ENCODE measurements at regions of chr2 and their contacts with region 1.

Region 1: GRCh38 chr2:100610381-100610831 is 47.6 kb downstream of the PDCL3 start:
- DNase-seq: peak; percentile 68
- CTCF ChIP-seq: peak; percentile 67

Region 2: GRCh38 chr2:100416935-100417710 is 193.3 kb before region 1 on chr2 and contains the start of gene CHST10:
- CTCF ChIA-PET with region 1: no interaction called
- POLR2A ChIA-PET with region 1: no interaction called
- DNase-seq: peak; percentile 88
- CTCF ChIP-seq: no peak

Region 3: DNA sequence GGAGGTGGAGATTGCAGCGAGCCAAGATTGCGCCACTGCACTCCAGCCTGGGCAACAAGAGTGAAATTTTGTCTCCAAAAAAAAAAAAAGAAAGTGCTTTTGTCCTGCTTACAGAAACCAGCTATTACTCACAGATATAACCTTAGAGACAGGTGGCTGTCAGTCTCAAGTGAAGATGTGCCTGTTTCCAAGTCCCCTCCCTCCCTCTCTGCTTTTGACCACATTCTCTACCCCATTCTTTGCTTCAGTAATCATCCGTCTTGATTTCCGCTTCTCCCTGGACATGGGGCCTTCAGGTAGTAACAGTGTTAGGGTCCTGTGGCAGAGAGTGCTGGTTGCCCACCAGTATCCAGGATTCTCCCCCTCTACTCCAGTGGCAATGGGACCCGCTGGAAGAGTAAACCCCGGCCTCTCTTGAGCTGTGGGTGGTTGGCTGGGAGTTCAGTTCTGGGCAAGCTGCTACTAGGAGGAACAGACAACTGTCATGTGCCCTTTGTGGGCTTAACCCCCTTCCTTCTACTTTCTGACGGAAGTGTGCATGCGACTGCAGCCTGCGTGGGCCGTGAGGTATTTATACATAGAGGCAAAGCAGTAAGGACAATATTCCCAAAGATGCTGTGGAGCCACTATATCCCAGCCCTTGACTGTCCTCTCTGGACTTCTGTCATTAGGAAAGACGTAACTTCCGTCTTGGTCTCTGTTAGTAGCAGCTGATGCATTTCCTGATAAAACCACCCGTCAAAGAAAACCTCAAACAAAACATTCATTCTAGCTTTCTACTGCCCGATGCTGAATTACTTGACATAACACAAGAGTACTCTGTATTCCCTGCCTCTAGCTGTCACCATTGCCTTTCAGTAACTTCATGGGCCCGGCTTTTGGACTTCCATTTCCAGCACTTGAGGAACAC is 29.8 kb before region 1 on chr2:
- CTCF ChIA-PET with region 1: interaction called, 12 read pairs
- POLR2A ChIA-PET with region 1: no interaction called
- DNase-seq: peak; percentile 64
- CTCF ChIP-seq: no peak

Region 4: DNA sequence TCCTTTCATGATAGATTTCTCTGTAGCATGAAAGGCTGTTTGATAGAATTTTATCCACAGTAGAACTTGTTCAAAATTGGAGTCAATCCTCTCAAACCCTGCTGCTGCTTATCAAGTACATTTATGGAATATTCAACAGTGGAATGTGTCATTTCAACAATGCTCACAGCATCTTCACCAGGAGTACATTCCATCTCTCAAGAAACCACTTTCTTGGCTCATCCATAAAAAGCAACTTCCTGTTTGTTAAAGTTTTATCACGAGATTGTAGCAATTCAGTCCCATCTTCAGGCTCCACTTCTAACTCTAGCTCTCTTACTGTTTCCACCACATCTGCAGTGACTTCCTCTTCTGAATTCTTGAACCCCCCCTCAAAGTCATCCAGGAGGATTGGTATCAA is 18.2 kb before region 1 on chr2:
- CTCF ChIA-PET with region 1: interaction called, 76 read pairs
- POLR2A ChIA-PET with region 1: no interaction called
- DNase-seq: no peak
- CTCF ChIP-seq: no peak

Region 5: DNA sequence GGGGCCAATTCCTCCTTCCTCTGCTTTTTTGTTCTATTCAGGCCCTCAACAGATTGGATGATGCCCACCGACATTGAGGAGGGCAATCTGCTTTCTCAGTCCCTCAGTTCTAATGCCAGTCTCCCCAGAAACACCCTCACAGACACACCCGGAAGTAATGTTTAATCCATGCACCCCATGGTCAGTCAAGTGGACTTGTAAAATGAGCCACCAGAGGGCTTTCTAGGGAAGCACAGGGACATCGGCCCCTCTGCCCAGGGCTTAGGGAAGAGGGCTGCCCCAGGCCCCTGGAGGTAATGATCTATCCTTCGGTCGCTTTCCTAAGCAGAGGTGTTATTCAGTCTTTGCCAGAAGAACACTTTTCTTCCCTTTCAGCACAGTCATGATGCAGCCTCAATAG is 59.8 kb after region 1 on chr2:
- CTCF ChIA-PET with region 1: no interaction called
- POLR2A ChIA-PET with region 1: no interaction called
- DNase-seq: no peak
- CTCF ChIP-seq: no peak

Region 6: DNA sequence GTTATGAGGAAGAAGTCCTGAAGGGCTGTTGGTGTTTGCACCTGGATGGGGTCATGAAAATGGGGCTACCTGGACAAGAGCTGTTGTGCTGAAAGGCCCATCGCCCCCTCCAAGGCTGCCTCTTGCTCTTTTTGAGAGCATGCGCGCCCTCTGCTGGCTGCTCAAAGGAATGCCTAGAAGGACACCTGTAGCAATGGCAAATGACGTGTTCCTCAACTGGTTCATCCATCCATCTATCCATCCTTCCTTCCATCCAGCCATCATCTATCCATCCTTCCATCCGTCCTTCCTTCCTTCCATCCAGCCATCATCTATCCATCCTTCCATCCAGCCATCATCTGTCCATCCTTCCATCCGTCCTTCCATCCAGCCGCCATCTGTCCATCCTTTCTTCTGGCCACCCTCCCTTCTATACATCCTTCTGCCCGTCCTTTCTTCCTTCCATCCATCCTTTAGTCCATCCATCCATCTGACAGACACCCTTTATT is 374.5 kb after region 1 on chr2:
- CTCF ChIA-PET with region 1: interaction called, 45 read pairs
- POLR2A ChIA-PET with region 1: no interaction called
- DNase-seq: peak; percentile 82
- CTCF ChIP-seq: peak; percentile 91

Region 7: DNA sequence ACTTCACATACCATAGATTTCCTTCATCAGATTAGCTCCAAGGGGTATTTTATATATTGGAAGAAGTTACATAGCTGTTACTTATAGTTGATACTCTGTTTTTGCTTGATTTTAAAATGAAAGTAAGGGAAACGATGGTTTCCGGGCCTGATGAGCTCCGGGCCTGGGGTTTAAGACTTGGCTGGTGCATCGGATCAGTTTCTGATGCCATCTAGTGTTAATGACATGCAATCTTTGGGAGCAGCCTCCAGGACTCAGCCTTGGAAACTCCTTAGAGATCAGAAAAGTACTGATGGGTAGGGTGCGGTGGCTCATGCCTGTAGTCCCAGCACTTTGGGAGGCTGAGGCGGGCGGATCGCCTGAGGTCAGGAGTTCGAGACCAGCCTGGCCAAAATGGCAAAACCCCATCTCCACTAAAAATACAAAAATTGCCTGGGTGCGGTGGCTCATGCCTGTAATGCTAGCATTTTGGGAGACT is 595.2 kb after region 1 on chr2:
- CTCF ChIA-PET with region 1: interaction called, 10 read pairs
- POLR2A ChIA-PET with region 1: no interaction called
- DNase-seq: peak; percentile 57
- CTCF ChIP-seq: peak; percentile 51

Region 8: DNA sequence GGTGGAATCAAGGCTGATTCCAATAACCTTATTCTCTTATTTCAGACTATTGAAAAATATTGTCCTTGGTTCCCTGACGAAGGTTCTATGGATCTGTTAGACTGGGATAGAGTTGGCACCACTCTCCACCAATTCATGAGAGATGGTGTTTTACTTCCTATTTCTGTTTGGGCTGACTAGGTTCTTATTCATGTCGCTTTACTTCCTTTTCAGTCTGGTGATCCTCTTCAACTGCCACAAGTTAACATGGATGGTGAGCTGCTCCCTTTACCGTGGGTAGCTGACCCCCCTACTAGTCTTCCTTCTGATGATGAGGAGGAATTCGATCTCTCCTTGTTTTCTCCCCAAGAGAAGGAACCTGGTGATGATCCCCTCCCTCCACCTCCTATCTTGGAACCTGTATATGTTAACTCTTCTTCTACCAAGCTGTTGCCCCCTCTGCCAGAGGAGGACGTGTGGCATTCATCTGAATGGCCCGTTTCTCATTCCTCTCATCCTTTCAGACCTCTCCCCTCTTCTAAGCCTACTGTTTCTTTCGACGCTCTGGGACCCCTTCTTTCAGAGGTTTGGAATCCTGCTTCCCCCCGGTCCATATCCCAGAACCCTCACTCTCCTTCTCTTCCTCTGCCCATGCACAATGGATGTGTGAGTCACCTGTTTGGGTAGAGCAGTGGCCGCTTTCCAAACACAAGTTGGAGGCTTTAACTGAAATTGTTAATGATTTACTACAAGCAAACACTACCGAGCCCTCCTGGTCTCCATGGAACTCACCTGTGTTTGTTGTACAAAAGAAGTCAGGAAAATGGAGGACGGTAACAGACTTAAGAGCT is 628.7 kb after region 1 on chr2:
- CTCF ChIA-PET with region 1: no interaction called
- POLR2A ChIA-PET with region 1: no interaction called
- DNase-seq: no peak
- CTCF ChIP-seq: no peak